ENCODE measurements at regions of chr2 and their contacts with region 1.

Region 1: DNA sequence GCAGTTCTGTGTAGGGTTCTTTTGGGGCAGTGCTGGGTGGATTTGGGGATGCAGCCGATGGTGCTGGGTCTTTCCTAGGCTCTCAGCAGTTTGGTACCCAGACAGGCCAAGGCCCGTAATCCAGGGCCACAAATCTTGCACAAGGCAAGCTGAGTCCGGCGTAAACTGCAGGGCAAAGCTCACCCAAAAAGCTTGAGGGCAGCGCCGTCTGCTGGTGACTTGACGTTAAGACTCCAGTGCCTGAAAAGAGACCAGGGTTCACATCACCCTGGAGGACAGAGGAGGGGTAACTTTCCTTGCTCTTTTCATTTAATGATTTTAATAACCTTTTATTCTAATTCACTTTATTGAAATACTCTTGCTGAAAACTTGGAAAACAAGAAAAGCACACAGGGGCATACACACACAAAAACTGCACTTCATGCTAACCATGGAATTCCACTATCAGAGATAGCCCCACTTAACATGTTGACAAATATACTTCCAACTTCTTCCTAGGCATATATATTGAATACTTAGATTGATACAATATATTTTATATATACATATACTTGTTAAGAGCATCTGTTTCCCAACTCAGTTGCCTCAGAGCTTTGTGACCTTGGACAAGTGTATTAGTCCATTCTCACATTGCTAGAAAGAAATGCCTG is 38.9 kb downstream of the CNGA3 start:
- DNase-seq: peak; percentile 57 to 68 (median 66)
- H3K4me3 ChIP-seq: no peak overlapping the region
- H3K4me3 Mint-ChIP-seq: no peak overlapping the region
- H3K27ac ChIP-seq: no peak overlapping the region
- H3K27ac Mint-ChIP-seq: no peak overlapping the region
- H3K4me1 ChIP-seq: no peaks in the 10 kb centered on the region
- H3K4me1 Mint-ChIP-seq: no peaks in the 10 kb centered on the region
- H3K27me3 ChIP-seq: no peaks in the 10 kb centered on the region
- H3K27me3 Mint-ChIP-seq: peaks cover 7 to 12% (median 9%) of the 10 kb centered on the region in 3 donors
- CTCF ChIP-seq: peak; percentile 96

Region 2: GRCh38 chr2:97697252-97698235 is 687.6 kb before region 1 on chr2:
- intact Hi-C with region 1: loop called in 1 of 2 experiments (anchors 10 kb)
- DNase-seq: peak; percentile 76 to 87 (median 82)
- H3K4me3 ChIP-seq: no peak overlapping the region
- H3K4me3 Mint-ChIP-seq: peak overlapping the region; percentile 24 to 27
- H3K27ac ChIP-seq: no peak overlapping the region
- H3K27ac Mint-ChIP-seq: peak overlapping the region in 1 of 7 donors; percentile 23
- H3K4me1 ChIP-seq: no peaks in the 10 kb centered on the region
- H3K4me1 Mint-ChIP-seq: peaks cover 10% of the 10 kb centered on the region
- H3K27me3 ChIP-seq: no peaks in the 10 kb centered on the region
- H3K27me3 Mint-ChIP-seq: peaks cover 2 to 4% (median 3%) of the 10 kb centered on the region in 3 donors
- CTCF ChIP-seq: peak; percentile 89

Region 3: DNA sequence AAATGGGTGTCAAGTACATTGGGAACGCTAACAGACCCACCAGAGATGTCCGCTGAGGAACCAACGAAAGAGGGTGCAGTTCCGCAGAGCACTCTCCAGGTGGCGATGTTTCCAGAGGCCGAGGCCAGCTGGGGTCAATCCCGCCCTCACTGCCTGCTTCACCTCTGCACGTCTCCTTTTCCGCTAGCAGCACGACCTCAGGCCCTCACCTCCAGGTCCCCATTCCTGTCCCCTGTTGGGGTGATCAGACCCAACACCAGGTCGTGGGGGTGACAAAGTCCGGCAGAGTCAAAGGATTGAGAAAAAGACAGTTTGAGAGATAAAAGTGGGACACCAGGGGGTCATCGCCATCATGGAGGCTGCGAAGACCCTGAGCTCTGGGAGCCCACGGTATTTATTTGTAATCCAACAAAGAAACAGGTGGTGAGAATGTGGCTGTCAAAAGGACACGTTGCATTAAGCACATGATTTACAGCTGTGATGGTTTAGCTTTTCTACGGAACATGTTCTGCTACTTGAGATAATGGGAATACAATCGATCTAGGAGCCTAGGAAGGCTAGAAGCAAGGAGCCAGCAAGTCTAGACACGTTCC is 644.5 kb before region 1 on chr2:
- intact Hi-C with region 1: loop called in 1 of 2 experiments (anchors 10 kb)
- DNase-seq: peak; percentile 27 to 44 (median 43)
- H3K4me3 ChIP-seq: no peak overlapping the region
- H3K4me3 Mint-ChIP-seq: no peak overlapping the region
- H3K27ac ChIP-seq: no peak overlapping the region
- H3K27ac Mint-ChIP-seq: no peak overlapping the region
- H3K4me1 ChIP-seq: peaks cover 7% of the 10 kb centered on the region in 2 donors
- H3K4me1 Mint-ChIP-seq: peaks cover 20% of the 10 kb centered on the region
- H3K27me3 ChIP-seq: no peaks in the 10 kb centered on the region
- H3K27me3 Mint-ChIP-seq: peaks cover 1 to 8% (median 5%) of the 10 kb centered on the region in 3 donors
- CTCF ChIP-seq: peak; percentile 89

Region 4: GRCh38 chr2:97806738-97807618 is 578.2 kb before region 1 on chr2:
- intact Hi-C with region 1: loop called (anchors 2 to 5 kb)
- DNase-seq: peak; percentile 55 to 66 (median 58)
- H3K4me3 ChIP-seq: no peak overlapping the region
- H3K4me3 Mint-ChIP-seq: no peak overlapping the region
- H3K27ac ChIP-seq: no peak overlapping the region
- H3K27ac Mint-ChIP-seq: no peak overlapping the region
- H3K4me1 ChIP-seq: no peaks in the 10 kb centered on the region
- H3K4me1 Mint-ChIP-seq: no peaks in the 10 kb centered on the region
- H3K27me3 ChIP-seq: no peaks in the 10 kb centered on the region
- H3K27me3 Mint-ChIP-seq: no peaks in the 10 kb centered on the region
- CTCF ChIP-seq: peak; percentile 86

Region 5: DNA sequence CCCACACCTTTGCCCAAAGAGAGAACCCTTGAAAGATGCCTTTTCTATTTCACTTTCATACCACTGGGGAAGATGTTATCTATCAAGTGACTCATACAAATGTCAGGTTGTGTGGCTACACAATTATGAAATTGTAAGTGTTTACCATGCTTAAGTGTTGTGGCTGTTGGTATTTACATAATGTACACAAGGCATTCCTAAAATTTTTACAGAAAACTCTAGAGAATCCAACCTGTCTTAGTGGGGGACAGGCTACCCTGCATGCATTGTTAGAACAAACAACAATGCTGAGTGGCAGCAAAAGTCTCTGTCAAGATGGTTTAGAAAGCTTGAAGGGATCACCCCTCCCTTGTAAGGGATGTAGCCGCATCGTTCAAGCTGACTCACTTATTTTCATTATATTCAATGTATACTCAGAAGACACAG is 351.3 kb after region 1 on chr2:
- intact Hi-C with region 1: no loop called
- DNase-seq: no peak
- H3K4me3 ChIP-seq: no peak overlapping the region
- H3K4me3 Mint-ChIP-seq: no peak overlapping the region
- H3K27ac ChIP-seq: no peak overlapping the region
- H3K27ac Mint-ChIP-seq: no peak overlapping the region
- H3K4me1 ChIP-seq: peaks cover 36 to 37% of the 10 kb centered on the region in 2 donors
- H3K4me1 Mint-ChIP-seq: peaks cover 41% of the 10 kb centered on the region
- H3K27me3 ChIP-seq: no peaks in the 10 kb centered on the region
- H3K27me3 Mint-ChIP-seq: peaks cover 2 to 4% (median 3%) of the 10 kb centered on the region in 3 donors
- CTCF ChIP-seq: no peak

Measured in CD14-positive monocyte (primary cell).